AG04450 (cell line): ENCODE measurements at regions of chr22 and their contacts with region 1.

Region 1: GRCh38 chr22:19970479-19971275 is 29.1 kb upstream of the TXNRD2 start:
- DNase-seq: no peak
- H3K4me3 ChIP-seq: no peak overlapping the region
- H3K27ac ChIP-seq: no peak overlapping the region
- H3K27me3 ChIP-seq: no peaks in the 10 kb centered on the region
- CTCF ChIP-seq: peak; percentile 90

Region 2: DNA sequence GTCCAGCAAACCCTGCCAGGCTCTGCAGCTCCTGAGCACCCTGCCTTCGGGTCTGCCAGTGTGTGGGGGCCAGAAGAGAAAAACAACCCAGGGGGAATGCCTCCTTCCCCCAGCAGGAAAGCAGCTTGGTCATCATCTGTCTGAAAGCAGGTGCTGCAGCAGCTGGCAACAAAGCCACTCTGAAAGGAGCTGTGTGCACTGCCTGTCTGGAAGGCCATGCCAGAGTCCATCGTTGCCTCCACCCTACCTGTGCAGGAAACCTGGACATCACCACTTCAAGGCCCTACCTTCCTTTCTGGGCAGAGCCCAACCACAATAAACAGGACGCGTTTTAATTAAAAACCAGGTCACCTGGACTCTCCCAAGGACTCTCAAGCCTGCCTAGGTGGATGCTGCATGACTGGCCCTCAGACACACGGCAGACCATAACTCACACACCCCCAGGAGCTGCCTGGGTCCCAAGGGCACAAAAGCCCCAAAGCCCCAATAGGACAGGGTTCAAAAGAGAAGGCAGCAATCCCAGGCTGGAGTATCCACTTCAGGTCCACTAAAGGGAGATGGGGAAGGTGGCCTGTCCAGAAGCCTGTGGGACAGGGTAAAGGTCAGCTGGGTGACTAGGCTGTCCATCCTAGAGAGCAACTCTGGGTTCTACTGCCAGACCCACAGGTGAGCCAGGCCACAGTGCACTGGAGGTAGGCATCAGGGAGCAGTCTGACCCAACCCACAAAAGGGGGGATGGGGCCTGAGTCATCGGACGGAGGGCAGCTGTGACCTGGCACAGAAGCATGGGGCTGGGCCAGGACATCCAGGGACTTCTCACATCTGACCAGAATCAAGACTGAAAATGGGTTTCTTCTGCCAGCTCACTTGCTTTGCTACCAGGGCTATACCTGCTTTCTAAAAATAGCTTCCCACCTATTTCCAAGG is 122.1 kb before region 1 on chr22:
- CTCF ChIA-PET with region 1: no interaction called
- POLR2A ChIA-PET with region 1: no interaction called
- DNase-seq: no peak
- H3K4me3 ChIP-seq: no peak overlapping the region
- H3K27ac ChIP-seq: no peak overlapping the region
- H3K27me3 ChIP-seq: no peaks in the 10 kb centered on the region
- CTCF ChIP-seq: no peak

Region 3: GRCh38 chr22:20013382-20013871 is 42.8 kb after region 1 on chr22:
- CTCF ChIA-PET with region 1: interaction called, 68 read pairs
- POLR2A ChIA-PET with region 1: interaction called, 10 read pairs
- DNase-seq: no peak
- H3K4me3 ChIP-seq: no peak overlapping the region
- H3K27ac ChIP-seq: no peak overlapping the region
- H3K27me3 ChIP-seq: peaks cover 27% of the 10 kb centered on the region
- CTCF ChIP-seq: peak; percentile 88